Heart left ventricle (tissue), 16 donors: ENCODE measurements at regions of chr7 and their contacts with region 1.

Region 1: DNA sequence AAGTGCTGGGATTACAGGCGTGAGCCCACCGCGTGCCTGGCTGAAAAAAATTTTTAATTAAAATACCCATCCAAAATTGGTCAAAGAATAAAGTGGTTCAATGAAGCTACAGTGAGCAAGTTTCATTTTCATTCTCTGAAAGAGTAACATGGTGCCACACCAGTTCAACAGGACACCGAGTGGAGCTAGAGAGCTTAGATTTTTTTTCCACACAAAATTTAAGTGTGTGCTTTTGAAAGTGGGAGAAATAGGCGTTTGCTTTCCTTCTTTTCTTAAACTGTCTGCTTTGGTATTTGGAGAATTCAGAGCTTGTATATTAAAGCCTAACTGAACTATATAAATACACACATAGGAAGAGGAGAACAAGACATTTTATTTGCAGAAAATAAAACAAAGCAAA is 43.4 kb downstream of the BPGM start:
- DNase-seq: peak in 1 of 5 donors; percentile 39
- ATAC-seq: peak; percentile 63 to 89 (median 82)
- H3K4me3 ChIP-seq: peak overlapping the region in 11 of 12 donors; percentile 8 to 58 (median 45)
- H3K27ac ChIP-seq: peak overlapping the region in 9 of 12 donors; percentile 38 to 80 (median 47)
- H3K4me1 ChIP-seq: peaks cover 0 to 33% (median 7%) of the 10 kb centered on the region in 12 donors
- H3K27me3 ChIP-seq: no peaks in the 10 kb centered on the region
- CTCF ChIP-seq: peak; percentile 18 to 78 (median 58)
- POLR2A ChIP-seq: no peak

Region 2: DNA sequence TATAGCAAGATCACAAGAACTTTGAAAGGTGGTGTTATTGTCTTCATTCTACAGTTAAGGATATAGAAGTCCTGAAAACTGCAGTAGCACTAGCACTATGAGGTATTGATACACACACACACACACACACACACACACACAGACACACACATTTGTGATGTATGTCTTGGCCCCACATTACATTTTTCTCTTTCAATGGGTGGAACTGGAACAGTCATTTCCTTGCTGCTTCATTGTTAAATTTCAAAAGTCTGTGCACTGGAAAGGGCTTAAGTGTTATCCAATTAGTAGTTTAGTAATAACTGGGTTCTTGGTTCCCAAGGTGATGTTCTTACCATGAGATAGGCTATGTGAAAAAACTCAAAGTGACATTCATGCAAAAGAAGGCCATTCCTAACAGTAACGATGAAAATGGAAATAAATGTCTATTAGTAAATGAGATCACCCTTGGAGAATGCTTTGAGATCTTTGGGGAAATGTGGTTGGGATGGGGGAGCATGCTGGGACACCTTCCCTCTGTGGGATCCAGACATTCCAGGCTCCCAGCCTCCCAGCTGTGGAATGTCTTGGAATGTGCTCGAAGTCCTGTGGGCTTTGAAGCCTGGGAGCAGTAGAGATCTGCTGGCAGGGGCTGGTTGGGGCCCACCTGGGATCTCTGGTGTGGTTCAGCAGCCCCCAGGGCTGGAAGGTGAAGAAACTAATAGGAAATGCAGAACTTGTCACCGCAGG is 52.1 kb after region 1 on chr7:
- intact Hi-C with region 1: loop called in 2 of 10 experiments (anchors 10 kb)
- DNase-seq: peak; percentile 30 to 65 (median 52)
- ATAC-seq: peak; percentile 54 to 78 (median 64)
- H3K4me3 ChIP-seq: no peak overlapping the region
- H3K27ac ChIP-seq: peak overlapping the region; percentile 25 to 88 (median 58)
- H3K4me1 ChIP-seq: peaks cover 0 to 62% (median 5%) of the 10 kb centered on the region in 12 donors
- H3K27me3 ChIP-seq: no peaks in the 10 kb centered on the region
- CTCF ChIP-seq: no peak
- POLR2A ChIP-seq: no peak

Region 3: GRCh38 chr7:134755401-134756022 is 65.5 kb after region 1 on chr7:
- intact Hi-C with region 1: loop called in 7 of 10 experiments (anchors 2 to 10 kb)
- DNase-seq: peak in 1 of 5 donors; percentile 36
- ATAC-seq: no peak
- H3K4me3 ChIP-seq: no peak overlapping the region
- H3K27ac ChIP-seq: no peak overlapping the region
- H3K4me1 ChIP-seq: peaks cover 0 to 9% (median 0%) of the 10 kb centered on the region in 12 donors
- H3K27me3 ChIP-seq: no peaks in the 10 kb centered on the region
- CTCF ChIP-seq: peak; percentile 32 to 73 (median 58)
- POLR2A ChIP-seq: no peak

Region 4: DNA sequence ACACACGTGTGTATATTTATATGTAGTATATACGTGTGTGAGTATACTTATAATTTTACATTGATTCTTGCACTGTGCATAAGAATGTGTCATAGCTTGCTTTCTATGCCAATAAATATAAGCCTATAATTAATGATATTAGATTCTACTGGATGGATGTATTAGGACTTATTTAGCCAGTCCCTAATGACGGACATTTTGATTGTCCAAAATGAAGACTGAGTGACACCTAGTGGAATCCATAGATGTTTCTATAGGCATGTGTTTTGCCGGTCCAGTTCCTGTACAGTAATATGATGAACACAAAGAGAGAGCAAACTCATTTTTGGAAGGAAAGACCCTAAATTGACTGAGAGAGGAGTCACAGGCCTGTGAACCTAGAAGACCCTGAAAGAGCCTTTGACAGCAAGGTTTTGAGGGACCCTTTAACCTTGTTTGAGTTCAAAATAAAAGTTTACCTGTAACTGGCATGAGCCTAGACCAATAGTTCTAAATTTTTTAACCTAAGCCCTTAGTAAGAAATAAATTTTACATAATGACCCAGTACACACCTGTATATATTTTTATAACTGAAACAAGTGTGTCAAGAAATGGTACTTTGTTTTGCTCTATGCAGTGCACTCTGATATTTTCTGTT is 253.9 kb after region 1 on chr7:
- intact Hi-C with region 1: loop called in 5 of 10 experiments (anchors 2 to 5 kb)
- DNase-seq: no peak
- ATAC-seq: peak in 3 of 4 donors; percentile 44 to 53 (median 49)
- H3K4me3 ChIP-seq: no peak overlapping the region
- H3K27ac ChIP-seq: peak overlapping the region in 1 of 12 donors; percentile 7
- H3K4me1 ChIP-seq: peaks cover 0 to 21% (median 8%) of the 10 kb centered on the region in 12 donors
- H3K27me3 ChIP-seq: no peaks in the 10 kb centered on the region
- CTCF ChIP-seq: peak in 11 of 12 donors; percentile 12 to 65 (median 43)
- POLR2A ChIP-seq: no peak

Region 5: GRCh38 chr7:135170274-135170997 is 480.4 kb after region 1 on chr7 and contains the start of gene CYREN:
- intact Hi-C with region 1: loop called in 6 of 10 experiments (anchors 2 to 10 kb)
- DNase-seq: peak; percentile 96 to 98 (median 97)
- ATAC-seq: peak; percentile 89 to 97 (median 95)
- H3K4me3 ChIP-seq: peak within 1 kb of the TSS; percentile 68 to 99 (median 87)
- H3K27ac ChIP-seq: peak within 1 kb of the TSS; percentile 83 to 100 (median 97)
- H3K4me1 ChIP-seq: peaks cover 9 to 63% (median 49%) of the 10 kb centered on the region in 12 donors
- H3K27me3 ChIP-seq: no peaks in the 10 kb centered on the region
- CTCF ChIP-seq: peak; percentile 42 to 93 (median 75)
- POLR2A ChIP-seq: peak in 1 of 2 donors; percentile 67
- total RNA-seq, gene CYREN: 18.4 to 35.8 (median 24.9) TPM